ENCODE measurements at regions of chr15 and their contacts with region 1.

Region 1: DNA sequence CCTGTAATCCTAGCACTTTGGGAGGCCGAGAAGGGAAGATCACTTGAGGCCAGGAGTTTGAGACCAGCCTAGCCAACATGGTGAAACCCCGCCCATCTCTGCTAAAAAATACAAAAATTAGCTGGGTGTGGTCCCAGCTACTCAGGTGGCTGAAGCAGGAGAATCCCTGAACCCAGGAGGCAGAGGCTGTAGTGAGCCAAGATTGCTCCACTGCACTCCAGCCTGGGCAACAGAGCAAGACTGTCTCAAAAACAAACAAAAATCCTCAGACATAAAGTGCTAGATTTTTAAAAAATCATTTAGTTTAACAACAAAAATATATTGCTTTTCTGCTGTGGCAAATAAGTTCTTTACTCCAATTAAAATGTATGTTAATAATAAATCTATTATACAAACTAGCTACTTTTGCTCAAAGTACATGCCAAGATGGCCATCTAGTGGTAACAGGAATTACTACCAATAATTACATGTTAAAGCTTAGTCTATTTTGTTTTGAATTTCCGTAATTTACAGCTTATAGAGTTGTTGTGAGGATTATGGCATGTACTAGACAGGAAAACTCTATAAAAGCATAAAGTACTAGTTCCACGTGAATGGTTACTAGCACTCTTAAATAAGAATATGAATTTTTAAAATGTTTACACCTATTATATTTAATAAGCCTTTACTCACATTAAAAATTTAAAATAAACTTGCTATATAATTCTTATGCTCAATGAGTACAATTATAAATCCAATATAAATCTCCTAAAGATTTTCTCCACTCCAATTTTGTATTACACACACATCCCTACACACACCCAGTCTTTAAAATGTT is 39.0 kb downstream of the GABPB1 start:
- DNase-seq: no peak
- H3K4me3 ChIP-seq: no peak overlapping the region
- H3K27ac ChIP-seq: no peak overlapping the region
- H3K4me1 ChIP-seq: peaks cover 0 to 8% (median 0%) of the 10 kb centered on the region in 4 donors
- H3K27me3 ChIP-seq: no peaks in the 10 kb centered on the region
- CTCF ChIP-seq: peak; percentile 62 to 76 (median 69)
- EP300 ChIP-seq: no peak
- POLR2A ChIP-seq: no peak

Region 2: GRCh38 chr15:50176869-50177268 is 139.2 kb before region 1 on chr15:
- in situ Hi-C with region 1: loop called in 1 of 4 experiments (anchors 10 kb)
- intact Hi-C with region 1: no loop called
- DNase-seq: no peak
- H3K4me3 ChIP-seq: no peak overlapping the region
- H3K27ac ChIP-seq: no peak overlapping the region
- H3K4me1 ChIP-seq: peaks cover 0 to 5% (median 3%) of the 10 kb centered on the region in 4 donors
- H3K27me3 ChIP-seq: peaks cover 1% of the 10 kb centered on the region
- CTCF ChIP-seq: no peak
- EP300 ChIP-seq: no peak
- POLR2A ChIP-seq: no peak

Region 3: GRCh38 chr15:50390554-50391287 is 74.7 kb after region 1 on chr15:
- in situ Hi-C with region 1: no loop called
- intact Hi-C with region 1: no loop called
- DNase-seq: no peak
- H3K4me3 ChIP-seq: no peak overlapping the region
- H3K27ac ChIP-seq: no peak overlapping the region
- H3K4me1 ChIP-seq: no peaks in the 10 kb centered on the region
- H3K27me3 ChIP-seq: no peaks in the 10 kb centered on the region
- CTCF ChIP-seq: no peak
- EP300 ChIP-seq: no peak
- POLR2A ChIP-seq: no peak

Measured in transverse colon (tissue), 4 donors.